Calu3 (cell line): ENCODE measurements at regions of chr10 and their contacts with region 1.

Region 1: DNA sequence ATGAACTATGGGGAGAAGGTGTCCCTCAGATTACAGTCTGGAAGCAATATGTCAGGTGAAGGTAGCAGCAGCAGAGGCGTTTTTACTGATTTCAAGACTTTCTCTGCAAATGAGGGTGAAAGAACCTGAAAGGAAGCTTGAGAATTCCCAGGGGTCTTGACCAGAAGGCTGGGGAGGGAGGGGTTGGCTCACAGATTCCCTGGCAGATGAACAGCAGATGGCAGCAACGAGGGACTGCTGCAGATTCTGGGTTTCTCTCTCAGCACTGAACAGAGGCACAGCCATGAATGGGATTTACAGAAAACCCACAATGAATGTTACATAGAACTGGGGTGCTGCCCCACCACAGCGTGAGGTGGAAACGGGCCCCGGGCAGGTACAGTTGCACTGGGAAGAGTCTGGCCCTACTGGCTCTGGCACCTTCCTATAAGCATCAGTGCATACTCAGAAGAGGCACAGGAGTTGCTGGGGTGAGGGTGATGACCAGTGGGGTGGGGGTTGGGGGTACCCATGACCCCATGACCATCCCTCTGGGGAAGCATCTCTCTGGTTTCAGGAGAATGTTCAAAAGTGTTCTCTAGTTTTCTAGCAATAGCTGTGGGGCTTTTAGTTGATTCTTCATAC is 317.8 kb downstream of the SH2D4B start:
- DNase-seq: peak; percentile 44
- H3K4me3 Mint-ChIP-seq: no peak overlapping the region
- H3K27ac Mint-ChIP-seq: no peak overlapping the region
- H3K4me1 Mint-ChIP-seq: no peaks in the 10 kb centered on the region
- H3K27me3 Mint-ChIP-seq: peaks cover 55% of the 10 kb centered on the region
- CTCF ChIP-seq: peak; percentile 38

Region 2: DNA sequence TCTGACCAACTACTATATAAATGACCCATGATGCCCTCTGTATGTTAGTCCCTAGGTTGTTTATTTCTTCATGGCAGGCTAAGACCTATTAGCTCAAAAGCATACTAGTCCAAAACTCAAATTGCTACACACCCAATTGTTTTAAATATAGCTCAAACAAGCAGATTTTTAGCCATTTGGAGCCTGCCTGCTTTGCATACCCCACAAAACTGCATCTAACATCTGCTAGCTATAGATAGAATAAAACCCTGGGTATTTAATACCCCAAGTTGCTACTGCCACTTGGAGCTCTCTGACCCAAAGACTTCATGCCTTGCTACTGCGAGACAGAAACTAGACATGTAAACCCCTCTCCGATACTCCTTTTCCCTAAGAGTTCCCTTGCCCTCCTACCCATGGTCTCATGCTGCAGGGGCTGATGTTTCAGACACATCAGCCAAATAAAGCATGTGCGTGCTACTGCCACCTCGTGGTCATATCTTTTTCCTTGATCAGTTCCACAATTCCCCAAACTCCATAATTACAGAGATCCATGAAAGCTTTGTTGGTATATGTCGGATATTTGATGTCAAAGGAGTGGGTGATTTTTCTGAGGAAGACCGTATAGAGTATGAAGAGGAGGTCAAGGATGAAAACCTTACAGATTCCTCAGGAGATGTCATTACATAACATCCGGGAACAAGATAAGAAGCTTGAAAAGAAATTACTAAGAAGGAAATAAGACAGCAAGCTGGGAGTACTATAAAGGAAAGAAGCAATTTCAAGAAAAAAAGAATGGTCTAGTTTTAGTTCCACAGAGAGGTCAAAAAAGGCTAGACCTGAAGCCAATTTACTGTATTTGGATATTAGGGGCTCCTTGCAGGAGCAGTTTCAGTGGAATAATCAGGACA is 68.8 kb after region 1 on chr10:
- CTCF ChIA-PET with region 1: no interaction called
- intact Hi-C with region 1: loop called (anchors 5 kb)
- DNase-seq: peak; percentile 71
- H3K4me3 Mint-ChIP-seq: no peak overlapping the region
- H3K27ac Mint-ChIP-seq: no peak overlapping the region
- H3K4me1 Mint-ChIP-seq: no peaks in the 10 kb centered on the region
- H3K27me3 Mint-ChIP-seq: peaks cover 22% of the 10 kb centered on the region
- CTCF ChIP-seq: peak; percentile 65

Region 3: GRCh38 chr10:81018708-81019365 is 163.4 kb after region 1 on chr10:
- CTCF ChIA-PET with region 1: no interaction called
- intact Hi-C with region 1: loop called (anchors 5 kb)
- DNase-seq: peak; percentile 52
- H3K4me3 Mint-ChIP-seq: peak overlapping the region; percentile 16
- H3K27ac Mint-ChIP-seq: no peak overlapping the region
- H3K4me1 Mint-ChIP-seq: peaks cover 8% of the 10 kb centered on the region
- H3K27me3 Mint-ChIP-seq: no peaks in the 10 kb centered on the region
- CTCF ChIP-seq: peak; percentile 76

Region 4: DNA sequence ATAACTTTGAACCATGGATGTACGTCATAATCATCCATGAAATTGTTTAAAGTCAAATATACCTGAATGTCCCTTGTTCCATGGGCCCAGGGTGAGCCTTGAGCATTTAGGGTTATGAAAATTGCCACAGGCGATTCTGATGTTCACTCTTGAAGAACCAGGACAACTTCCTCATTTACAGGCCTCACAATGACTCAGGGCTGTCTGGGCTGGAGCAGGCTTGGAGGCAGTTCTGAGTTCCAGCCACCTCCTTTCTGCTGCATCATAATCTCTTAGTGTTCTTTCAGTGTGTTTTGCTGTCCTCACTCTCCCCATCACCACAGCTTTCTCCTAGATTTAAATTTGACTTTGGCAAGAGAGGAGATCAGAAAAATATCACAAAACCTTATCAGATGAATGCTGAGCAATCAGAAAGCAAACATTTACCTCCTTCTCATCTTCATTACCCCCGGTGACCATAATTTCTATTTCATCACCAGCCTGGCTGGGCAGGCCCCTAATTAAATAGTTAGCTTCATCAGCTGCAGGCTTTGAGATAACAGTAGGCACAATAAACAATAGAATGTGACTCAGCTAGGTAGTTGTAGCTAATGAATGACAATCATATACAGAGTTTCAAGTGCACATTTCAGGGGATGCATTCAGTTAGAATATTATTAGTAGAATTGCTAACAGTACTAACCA is 253.2 kb after region 1 on chr10:
- CTCF ChIA-PET with region 1: no interaction called
- intact Hi-C with region 1: no loop called
- DNase-seq: peak; percentile 69
- H3K4me3 Mint-ChIP-seq: peak overlapping the region; percentile 27
- H3K27ac Mint-ChIP-seq: peak overlapping the region; percentile 91
- H3K4me1 Mint-ChIP-seq: peaks cover 17% of the 10 kb centered on the region
- H3K27me3 Mint-ChIP-seq: no peaks in the 10 kb centered on the region
- CTCF ChIP-seq: no peak

Region 5: DNA sequence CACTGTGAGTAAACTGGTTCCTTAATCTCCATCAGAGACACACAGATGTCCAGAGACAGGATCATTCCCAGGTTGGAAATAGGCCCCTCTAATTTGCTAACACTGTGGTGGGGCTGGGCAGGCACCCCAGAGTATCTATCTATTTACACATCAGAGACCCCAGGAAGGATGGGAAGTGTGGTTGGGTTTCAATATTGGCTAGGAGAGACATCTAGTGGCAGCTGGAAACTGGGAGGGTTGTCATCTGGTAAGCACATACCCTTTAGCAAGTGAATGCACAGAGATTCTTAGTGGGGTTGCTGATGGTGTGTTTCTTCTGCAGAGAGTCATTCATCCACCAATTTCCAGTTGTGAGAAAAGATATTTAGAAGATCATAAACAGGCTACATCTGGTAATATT is 983.5 kb after region 1 on chr10:
- CTCF ChIA-PET with region 1: no interaction called
- intact Hi-C with region 1: loop called (anchors 2 kb)
- DNase-seq: peak; percentile 36
- H3K4me3 Mint-ChIP-seq: no peak overlapping the region
- H3K27ac Mint-ChIP-seq: no peak overlapping the region
- H3K4me1 Mint-ChIP-seq: peaks cover 16% of the 10 kb centered on the region
- H3K27me3 Mint-ChIP-seq: no peaks in the 10 kb centered on the region
- CTCF ChIP-seq: peak; percentile 46